RWPE1 (cell line): ENCODE measurements at regions of chr13 and their contacts with region 1.

Region 1: GRCh38 chr13:75788481-75788981 is 152.4 kb downstream of the LMO7 start:
- DNase-seq: no peak
- H3K27ac ChIP-seq: peak overlapping the region; percentile 73
- CTCF ChIP-seq: no peak

Region 2: GRCh38 chr13:75495938-75496337 is 292.6 kb before region 1 on chr13:
- CTCF ChIA-PET with region 1: no interaction called
- POLR2A ChIA-PET with region 1: no interaction called
- DNase-seq: no peak
- H3K27ac ChIP-seq: no peak overlapping the region
- CTCF ChIP-seq: no peak

Region 3: DNA sequence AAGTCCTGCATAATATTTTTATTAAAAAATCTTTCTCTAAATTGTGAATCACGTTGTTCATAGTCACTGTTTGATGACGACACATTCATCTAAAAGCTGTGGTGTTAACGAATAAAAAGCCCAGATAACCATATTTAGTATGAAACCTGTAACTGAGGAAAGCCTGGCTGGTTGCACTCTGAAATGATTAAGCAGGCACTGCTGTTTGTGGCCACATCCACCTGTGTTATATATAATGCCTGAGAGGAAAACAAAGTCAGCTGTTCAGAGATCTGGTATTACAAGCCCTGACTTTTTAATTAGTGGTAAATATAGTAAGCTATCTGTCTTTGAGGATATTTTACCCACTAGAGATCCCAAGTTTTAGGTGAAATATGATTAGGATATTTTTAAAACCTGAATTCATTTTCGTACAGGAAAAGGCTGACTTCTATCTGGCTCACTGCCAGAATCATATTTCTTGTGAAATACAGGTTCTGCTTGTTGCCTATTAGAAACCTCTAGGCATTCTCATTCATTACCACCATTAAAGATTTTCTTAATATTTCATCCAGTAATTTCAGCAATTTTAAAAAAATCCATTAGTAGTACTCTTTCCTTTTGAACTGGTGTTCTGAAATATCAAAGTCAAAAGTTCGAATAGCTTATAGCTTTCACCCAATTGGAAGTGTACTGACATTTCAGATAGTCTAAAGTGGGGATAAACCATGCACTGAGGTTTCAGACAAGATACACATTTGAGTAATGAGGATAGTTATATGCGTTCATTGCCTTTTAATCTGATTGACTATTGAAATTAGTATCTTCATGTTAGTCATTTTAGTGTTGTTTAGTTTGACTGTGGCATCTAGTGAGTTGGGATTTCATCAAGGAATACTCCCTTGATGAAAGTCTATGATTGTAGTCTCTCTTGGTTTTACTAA is 72.7 kb before region 1 on chr13:
- CTCF ChIA-PET with region 1: no interaction called
- POLR2A ChIA-PET with region 1: no interaction called
- DNase-seq: no peak
- H3K27ac ChIP-seq: no peak overlapping the region
- CTCF ChIP-seq: no peak

Region 4: GRCh38 chr13:75770592-75771011 is 17.9 kb before region 1 on chr13:
- CTCF ChIA-PET with region 1: no interaction called
- POLR2A ChIA-PET with region 1: interaction called, 11 read pairs
- DNase-seq: no peak
- H3K27ac ChIP-seq: no peak overlapping the region
- CTCF ChIP-seq: no peak